ENCODE measurements at regions of chr10 and their contacts with region 1.

Region 1: GRCh38 chr10:68208424-68209042 is 23.4 kb downstream of the ATOH7 start:
- DNase-seq: peak; percentile 59
- H3K4me3 ChIP-seq: no peak overlapping the region
- H3K27ac ChIP-seq: no peak overlapping the region
- H3K4me1 ChIP-seq: no peaks in the 10 kb centered on the region
- H3K27me3 ChIP-seq: no peaks in the 10 kb centered on the region
- CTCF ChIP-seq: peak; percentile 77 to 82

Region 2: GRCh38 chr10:67849331-67850011 is 359.1 kb before region 1 on chr10:
- CTCF ChIA-PET with region 1: no interaction called
- dilution Hi-C with region 1: no loop called
- in situ Hi-C with region 1: loop called in 1 of 2 experiments (anchors 25 kb)
- intact Hi-C with region 1: no loop called
- DNase-seq: peak; percentile 84
- H3K4me3 ChIP-seq: peak overlapping the region; percentile 77 to 86 (median 80)
- H3K27ac ChIP-seq: peak overlapping the region; percentile 67
- H3K4me1 ChIP-seq: no peaks in the 10 kb centered on the region
- H3K27me3 ChIP-seq: no peaks in the 10 kb centered on the region
- CTCF ChIP-seq: no peak

Region 3: GRCh38 chr10:67923551-67923950 is 285.0 kb before region 1 on chr10:
- CTCF ChIA-PET with region 1: no interaction called
- dilution Hi-C with region 1: no loop called
- in situ Hi-C with region 1: no loop called
- intact Hi-C with region 1: no loop called
- DNase-seq: peak; percentile 6
- H3K4me3 ChIP-seq: no peak overlapping the region
- H3K27ac ChIP-seq: no peak overlapping the region
- H3K4me1 ChIP-seq: no peaks in the 10 kb centered on the region
- H3K27me3 ChIP-seq: no peaks in the 10 kb centered on the region
- CTCF ChIP-seq: no peak

Region 4: DNA sequence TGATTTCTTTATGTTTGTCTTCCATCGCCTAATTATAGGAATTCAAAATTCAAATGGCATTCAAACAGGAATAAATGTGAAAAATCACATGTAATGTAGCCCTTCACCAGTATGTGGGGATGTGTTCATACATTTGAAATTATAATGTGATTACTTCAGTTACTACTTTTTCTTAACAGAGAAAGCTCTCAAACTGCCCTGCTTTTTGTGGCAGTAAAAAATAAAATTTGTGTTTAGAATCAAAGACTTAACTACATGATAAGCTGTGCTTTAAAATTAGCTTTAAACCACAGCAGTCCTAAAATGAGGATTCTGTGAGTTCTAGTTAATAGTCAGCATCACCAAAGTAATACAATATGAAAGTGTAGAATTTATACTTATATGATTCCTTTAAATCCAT is 125.7 kb before region 1 on chr10:
- CTCF ChIA-PET with region 1: no interaction called
- dilution Hi-C with region 1: no loop called
- in situ Hi-C with region 1: no loop called
- intact Hi-C with region 1: loop called (anchors 1 kb)
- DNase-seq: no peak
- H3K4me3 ChIP-seq: no peak overlapping the region
- H3K27ac ChIP-seq: no peak overlapping the region
- H3K4me1 ChIP-seq: peaks cover 29% of the 10 kb centered on the region
- H3K27me3 ChIP-seq: no peaks in the 10 kb centered on the region
- CTCF ChIP-seq: peak; percentile 56 to 64

Region 5: DNA sequence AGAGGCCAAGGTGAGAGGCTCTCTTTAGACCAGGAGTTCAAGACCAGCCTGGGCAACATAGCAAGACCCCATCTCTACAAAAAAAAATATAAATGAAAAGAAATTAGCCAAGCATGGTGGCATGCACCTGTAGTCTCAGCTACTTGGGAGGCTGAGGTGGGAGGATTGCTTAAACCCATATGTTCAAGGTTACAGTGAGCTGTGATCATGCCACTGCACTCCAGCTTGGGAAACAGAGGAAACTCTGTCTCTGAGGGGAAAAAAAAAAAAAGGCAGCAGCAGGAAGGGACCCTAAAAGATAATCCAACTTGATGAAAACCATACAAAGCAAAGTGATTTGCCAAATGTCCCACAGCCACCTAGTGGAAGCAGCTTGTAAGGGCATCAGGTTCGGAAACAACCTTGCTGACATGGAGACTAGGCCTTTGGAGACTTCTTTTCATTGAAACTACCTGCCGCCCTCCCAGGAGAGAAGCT is 139.8 kb after region 1 on chr10:
- CTCF ChIA-PET with region 1: interaction called, 10 read pairs
- dilution Hi-C with region 1: no loop called
- in situ Hi-C with region 1: no loop called
- intact Hi-C with region 1: loop called (anchors 5 kb)
- DNase-seq: peak; percentile 27
- H3K4me3 ChIP-seq: no peak overlapping the region
- H3K27ac ChIP-seq: no peak overlapping the region
- H3K4me1 ChIP-seq: no peaks in the 10 kb centered on the region
- H3K27me3 ChIP-seq: no peaks in the 10 kb centered on the region
- CTCF ChIP-seq: peak; percentile 70 to 76

Measured in mammary epithelial cell (primary cell).